Ascending aorta (tissue), 2 donors: ENCODE measurements at regions of chr1 and their contacts with region 1.

Region 1: DNA sequence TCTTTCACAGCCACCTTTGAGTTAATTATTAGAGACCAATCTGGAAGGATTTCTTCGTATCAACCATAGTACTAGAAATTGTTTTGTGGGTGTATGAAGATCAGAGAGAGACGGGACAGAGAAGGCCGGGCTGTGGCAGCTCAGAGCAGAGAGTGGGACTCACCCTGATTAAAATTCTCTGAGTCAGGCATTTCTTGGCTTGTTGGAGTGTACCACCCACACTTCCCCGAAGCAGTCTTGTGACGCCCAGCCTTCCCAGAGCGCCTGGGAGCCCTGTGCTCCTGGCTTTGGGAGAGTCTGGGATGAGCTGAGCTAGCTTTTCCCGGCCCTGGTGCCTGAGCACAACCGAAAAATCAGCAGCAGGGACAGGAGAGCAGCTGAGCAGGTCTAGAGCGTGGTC is 19.4 kb downstream of the PLEKHM2 start:
- DNase-seq: peak; percentile 79 to 94
- H3K4me3 ChIP-seq: peak overlapping the region; percentile 3 to 12
- H3K27ac ChIP-seq: peak overlapping the region; percentile 84 to 91
- H3K4me1 ChIP-seq: peaks cover 16 to 26% of the 10 kb centered on the region in 2 donors
- H3K27me3 ChIP-seq: no peaks in the 10 kb centered on the region
- CTCF ChIP-seq: no peak

Region 2: DNA sequence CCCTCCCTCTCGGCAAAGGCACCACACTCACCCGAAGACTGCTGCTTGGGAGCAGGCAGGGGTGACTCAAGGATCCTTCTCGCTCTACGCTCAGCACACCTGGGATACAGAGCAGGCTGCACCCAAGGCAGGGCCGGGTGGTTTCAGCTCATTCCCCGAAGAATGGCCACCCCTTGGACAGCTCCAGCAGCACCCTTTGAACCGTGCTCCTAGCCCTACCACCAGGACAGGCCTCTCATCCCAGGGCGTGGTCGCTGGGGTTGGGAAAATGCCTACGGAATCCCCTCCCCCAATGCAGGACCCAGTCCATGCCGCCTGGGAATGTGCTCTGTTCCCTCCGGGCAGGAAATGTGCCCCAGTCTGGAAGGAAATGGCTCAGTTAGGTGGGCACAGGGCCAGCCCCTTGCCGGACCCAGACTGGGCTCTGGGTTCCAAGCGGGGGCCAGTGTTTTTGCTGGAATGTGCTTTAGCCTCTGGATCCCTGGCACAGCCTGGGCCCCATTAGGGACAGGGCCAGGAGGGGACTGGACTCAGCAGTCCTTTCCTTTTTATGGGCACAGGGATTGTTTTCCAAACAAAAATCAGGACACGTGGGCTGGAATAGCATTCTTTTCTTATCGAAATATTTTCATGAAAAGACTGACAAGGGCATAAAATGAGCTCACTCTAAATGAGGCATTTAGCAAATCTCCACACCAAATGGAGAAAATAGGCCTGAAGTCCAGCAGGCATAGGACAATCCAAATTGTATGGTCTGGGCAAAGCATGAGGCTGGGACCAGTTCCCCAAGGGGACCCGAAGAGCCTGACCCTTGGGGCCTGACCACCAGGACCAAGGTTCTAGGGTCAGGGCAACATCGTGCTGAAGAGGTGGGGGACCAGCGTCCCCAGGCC is 46.1 kb after region 1 on chr1:
- intact Hi-C with region 1: loop called (anchors 5 kb)
- DNase-seq: peak; percentile 73 to 97
- H3K4me3 ChIP-seq: peak overlapping the region; percentile 48 to 56
- H3K27ac ChIP-seq: peak overlapping the region; percentile 96 to 98
- H3K4me1 ChIP-seq: peaks cover 31 to 61% of the 10 kb centered on the region in 2 donors
- H3K27me3 ChIP-seq: no peaks in the 10 kb centered on the region
- CTCF ChIP-seq: no peak